Activated naive CD4-positive, alpha-beta T cell treated with anti-CD3 and anti-CD28 coated beads for 36 hours (primary cell): ENCODE measurements at regions of chr1 and their contacts with region 1.

Region 1: GRCh38 chr1:150109586-150109985 is 40.1 kb upstream of the PLEKHO1 start:
- DNase-seq: no peak
- H3K4me3 Mint-ChIP-seq: peak overlapping the region; percentile 57
- H3K27ac Mint-ChIP-seq: peak overlapping the region; percentile 79
- H3K4me1 Mint-ChIP-seq: peaks cover 60% of the 10 kb centered on the region
- H3K27me3 Mint-ChIP-seq: no peaks in the 10 kb centered on the region

Region 2: GRCh38 chr1:150127868-150128267 is 18.3 kb after region 1 on chr1:
- CTCF ChIA-PET with region 1: no interaction called
- intact Hi-C with region 1: loop called (anchors 2 kb)
- DNase-seq: peak; percentile 66
- H3K4me3 Mint-ChIP-seq: no peak overlapping the region
- H3K27ac Mint-ChIP-seq: peak overlapping the region; percentile 69
- H3K4me1 Mint-ChIP-seq: peaks cover 15% of the 10 kb centered on the region
- H3K27me3 Mint-ChIP-seq: no peaks in the 10 kb centered on the region

Region 3: DNA sequence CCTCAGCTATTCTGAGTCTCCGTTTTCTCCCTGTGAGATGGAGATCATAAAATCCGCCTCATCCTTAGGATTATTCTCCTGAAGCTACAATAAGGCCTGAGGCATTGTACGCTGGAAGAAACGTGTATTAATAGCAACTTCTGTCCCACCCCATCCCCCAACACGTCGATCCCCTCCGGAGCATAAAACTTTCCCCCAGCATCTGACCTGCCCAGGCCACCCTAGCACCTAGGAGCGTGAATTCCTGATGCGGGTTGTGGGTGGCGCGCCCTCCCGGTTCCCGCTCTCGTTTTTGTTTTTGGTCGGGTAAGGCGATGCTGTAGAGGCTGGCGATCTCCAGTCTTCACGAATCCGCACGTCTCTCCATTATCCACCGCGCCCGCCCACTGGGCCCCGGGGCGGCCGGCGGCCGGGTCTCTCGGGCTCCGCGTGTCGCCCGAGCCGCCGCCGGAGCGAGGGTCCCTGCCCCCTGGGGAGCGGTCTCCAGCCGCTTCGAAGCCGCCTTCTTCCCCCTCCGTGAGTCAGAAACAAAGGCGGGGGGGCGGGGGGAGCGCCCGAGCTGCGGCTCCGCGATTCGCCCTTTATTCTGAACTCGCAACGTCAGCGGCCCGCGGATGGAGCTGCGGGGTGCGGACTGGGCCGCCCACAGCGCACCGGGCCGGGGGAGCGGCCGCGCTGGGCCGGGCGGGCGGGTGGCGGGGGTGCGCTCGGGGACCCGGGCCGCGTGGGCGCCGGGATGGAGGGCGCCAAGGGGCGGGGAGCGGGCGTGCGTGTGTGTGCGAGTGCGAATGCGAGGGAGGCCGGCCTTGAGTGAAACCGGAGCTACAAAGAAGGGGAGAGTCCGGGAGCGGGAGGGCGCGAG is 39.9 kb after region 1 on chr1 and contains the start of gene PLEKHO1:
- CTCF ChIA-PET with region 1: no interaction called
- intact Hi-C with region 1: loop called (anchors 2 kb)
- DNase-seq: peak; percentile 81
- H3K4me3 Mint-ChIP-seq: peak within 1 kb of the TSS; percentile 75
- H3K27ac Mint-ChIP-seq: peak within 1 kb of the TSS; percentile 72
- H3K4me1 Mint-ChIP-seq: peaks cover 44% of the 10 kb centered on the region
- H3K27me3 Mint-ChIP-seq: no peaks in the 10 kb centered on the region
- total RNA-seq, gene PLEKHO1: 4.4 to 4.7 TPM